HEK293 (cell line): ENCODE measurements at regions of chrX and their contacts with region 1.

Region 1: DNA sequence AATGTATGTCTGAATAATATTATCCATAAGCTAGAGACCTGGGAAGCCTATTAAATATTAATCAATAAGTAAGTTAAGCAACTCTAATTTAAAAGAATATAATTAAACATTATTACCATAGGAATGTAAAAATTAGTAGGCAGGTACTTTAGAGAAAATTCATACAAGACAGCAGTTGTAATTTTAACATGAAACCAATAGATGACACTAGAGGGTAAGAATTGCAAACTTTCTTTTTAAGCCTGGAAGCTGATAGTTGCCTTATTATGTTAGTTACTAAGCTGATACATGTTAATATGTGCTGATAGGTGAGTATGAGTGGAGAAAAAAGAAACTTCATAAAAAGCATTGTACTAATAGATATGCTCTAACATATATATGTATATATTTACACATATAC is 1157.4 kb downstream of the FAM133A start:
- H3K4me3 ChIP-seq: no peak overlapping the region
- H3K27ac ChIP-seq: no peak overlapping the region
- H3K4me1 ChIP-seq: no peaks in the 10 kb centered on the region
- CTCF ChIP-seq: no peak

Region 2: GRCh38 chrX:94511564-94511963 is 319.8 kb before region 1 on chrX:
- CTCF ChIA-PET with region 1: no interaction called
- POLR2A ChIA-PET with region 1: no interaction called
- H3K4me3 ChIP-seq: no peak overlapping the region
- H3K27ac ChIP-seq: no peak overlapping the region
- H3K4me1 ChIP-seq: no peaks in the 10 kb centered on the region
- CTCF ChIP-seq: no peak

Region 3: GRCh38 chrX:94775640-94776039 is 55.7 kb before region 1 on chrX:
- CTCF ChIA-PET with region 1: no interaction called
- POLR2A ChIA-PET with region 1: no interaction called
- H3K4me3 ChIP-seq: no peak overlapping the region
- H3K27ac ChIP-seq: no peak overlapping the region
- H3K4me1 ChIP-seq: no peaks in the 10 kb centered on the region
- CTCF ChIP-seq: no peak

Region 4: DNA sequence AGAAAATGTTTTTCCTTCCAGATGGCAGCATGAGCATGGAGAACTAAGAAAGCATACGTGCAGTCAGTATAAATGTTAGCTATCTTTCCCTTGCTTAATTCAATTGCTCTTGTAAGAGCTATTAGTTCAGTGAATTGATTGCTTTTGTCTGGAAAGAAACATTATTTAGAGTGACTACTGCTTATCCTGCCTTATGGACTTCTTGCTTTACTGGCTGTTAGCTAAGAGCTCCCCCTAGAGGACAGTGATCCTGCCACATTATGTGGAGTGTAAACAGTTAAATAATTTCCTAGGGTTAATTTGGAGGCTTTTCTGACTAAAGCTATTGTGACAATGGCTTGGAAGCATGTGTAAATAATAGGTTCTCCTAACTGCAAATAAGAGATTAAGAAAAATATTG is 245.1 kb after region 1 on chrX:
- CTCF ChIA-PET with region 1: interaction called, 10 read pairs
- POLR2A ChIA-PET with region 1: no interaction called
- H3K4me3 ChIP-seq: no peak overlapping the region
- H3K27ac ChIP-seq: no peak overlapping the region
- H3K4me1 ChIP-seq: no peaks in the 10 kb centered on the region
- CTCF ChIP-seq: no peak